ENCODE measurements at regions of chr15 and their contacts with region 1.

Region 1: GRCh38 chr15:98647774-98648653 is at the start of gene IGF1R:
- DNase-seq: peak; percentile 83 to 87 (median 85)
- H3K4me3 ChIP-seq: peak within 1 kb of the TSS; percentile 87 to 92 (median 88)
- H3K4me3 Mint-ChIP-seq: peak within 1 kb of the TSS; percentile 94 to 99
- H3K27ac ChIP-seq: peak within 1 kb of the TSS in 1 of 2 donors; percentile 75
- H3K27ac Mint-ChIP-seq: peak within 1 kb of the TSS in 6 of 7 donors; percentile 73 to 91 (median 85)
- H3K4me1 ChIP-seq: peaks cover 24 to 35% of the 10 kb centered on the region in 2 donors
- H3K4me1 Mint-ChIP-seq: peaks cover 32% of the 10 kb centered on the region
- H3K27me3 ChIP-seq: peaks cover 36 to 65% of the 10 kb centered on the region in 2 donors
- H3K27me3 Mint-ChIP-seq: peaks cover 49 to 64% (median 52%) of the 10 kb centered on the region in 3 donors
- CTCF ChIP-seq: peak; percentile 68
- polyA plus RNA-seq, gene IGF1R: 0.35 to 4.9 (median 0.67) TPM

Region 2: GRCh38 chr15:98518823-98519561 is 129.0 kb before region 1 on chr15:
- intact Hi-C with region 1: loop called in 1 of 2 experiments (anchors 5 kb)
- DNase-seq: peak; percentile 66 to 72 (median 68)
- H3K4me3 ChIP-seq: no peak overlapping the region
- H3K4me3 Mint-ChIP-seq: peak overlapping the region in 1 of 2 donors; percentile 56
- H3K27ac ChIP-seq: no peak overlapping the region
- H3K27ac Mint-ChIP-seq: no peak overlapping the region
- H3K4me1 ChIP-seq: peaks cover 5 to 7% of the 10 kb centered on the region in 2 donors
- H3K4me1 Mint-ChIP-seq: peaks cover 5% of the 10 kb centered on the region
- H3K27me3 ChIP-seq: no peaks in the 10 kb centered on the region
- H3K27me3 Mint-ChIP-seq: peaks cover 0 to 6% (median 0%) of the 10 kb centered on the region in 3 donors
- CTCF ChIP-seq: peak; percentile 87

Region 3: GRCh38 chr15:98548154-98548971 is 99.7 kb before region 1 on chr15:
- intact Hi-C with region 1: loop called in 1 of 2 experiments (anchors 10 kb)
- DNase-seq: peak; percentile 75 to 95 (median 87)
- H3K4me3 ChIP-seq: peak overlapping the region; percentile 38 to 68 (median 52)
- H3K4me3 Mint-ChIP-seq: peak overlapping the region; percentile 78 to 96
- H3K27ac ChIP-seq: peak overlapping the region in 1 of 2 donors; percentile 99
- H3K27ac Mint-ChIP-seq: peak overlapping the region; percentile 80 to 99 (median 88)
- H3K4me1 ChIP-seq: peaks cover 20 to 36% of the 10 kb centered on the region in 2 donors
- H3K4me1 Mint-ChIP-seq: peaks cover 23% of the 10 kb centered on the region
- H3K27me3 ChIP-seq: peaks cover 0 to 33% of the 10 kb centered on the region in 2 donors
- H3K27me3 Mint-ChIP-seq: peaks cover 30 to 48% (median 32%) of the 10 kb centered on the region in 3 donors
- CTCF ChIP-seq: no peak

Region 4: DNA sequence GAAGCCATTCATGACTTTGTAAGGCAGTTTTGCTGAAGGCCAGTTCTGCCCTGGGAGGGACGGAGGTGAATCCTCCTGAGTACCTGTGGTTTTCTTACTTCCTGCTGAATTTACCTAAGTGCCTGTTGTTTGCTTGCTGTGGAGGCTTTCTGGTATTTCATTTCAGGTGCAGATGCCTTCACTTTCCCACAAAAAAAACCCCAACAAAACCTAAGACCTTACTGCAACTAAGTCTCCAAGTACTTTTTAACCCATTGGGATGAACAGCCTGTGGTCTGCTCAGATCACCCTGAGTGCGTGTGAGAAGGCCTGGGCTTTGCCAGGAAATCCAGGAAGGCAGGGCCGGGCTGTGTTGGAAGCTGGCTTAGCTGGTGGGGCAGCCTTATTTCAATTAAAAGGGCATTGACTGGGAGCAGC is 65.6 kb after region 1 on chr15:
- intact Hi-C with region 1: no loop called
- DNase-seq: no peak
- H3K4me3 ChIP-seq: no peak overlapping the region
- H3K4me3 Mint-ChIP-seq: no peak overlapping the region
- H3K27ac ChIP-seq: no peak overlapping the region
- H3K27ac Mint-ChIP-seq: peak overlapping the region in 1 of 7 donors; percentile 31
- H3K4me1 ChIP-seq: peaks cover 6 to 15% of the 10 kb centered on the region in 2 donors
- H3K4me1 Mint-ChIP-seq: peaks cover 30% of the 10 kb centered on the region
- H3K27me3 ChIP-seq: no peaks in the 10 kb centered on the region
- H3K27me3 Mint-ChIP-seq: peaks cover 0 to 1% (median 0%) of the 10 kb centered on the region in 3 donors
- CTCF ChIP-seq: no peak

Region 5: DNA sequence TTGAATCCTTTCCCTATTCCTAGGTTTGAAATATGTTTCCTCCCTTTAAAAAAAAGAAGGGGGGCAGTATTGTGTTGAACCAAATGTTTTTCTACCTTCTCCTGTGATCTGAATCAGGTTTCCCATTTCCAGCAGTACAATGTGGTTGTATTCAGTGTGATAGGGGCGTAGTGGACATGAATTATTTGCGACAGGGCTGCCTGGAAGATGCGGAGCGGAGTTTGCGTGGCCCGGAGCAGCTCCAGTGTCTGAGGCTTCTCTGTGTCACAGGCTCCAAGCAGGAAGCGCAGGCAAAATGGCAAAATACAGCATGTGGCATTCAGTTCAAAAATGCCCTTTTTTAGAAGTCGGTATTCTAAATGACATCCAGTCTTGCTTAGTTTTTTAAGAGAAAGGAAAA is 205.1 kb after region 1 on chr15:
- intact Hi-C with region 1: loop called (anchors 1 kb)
- DNase-seq: peak; percentile 81 to 83 (median 82)
- H3K4me3 ChIP-seq: peak overlapping the region; percentile 57 to 86 (median 60)
- H3K4me3 Mint-ChIP-seq: peak overlapping the region; percentile 96 to 99
- H3K27ac ChIP-seq: peak overlapping the region in 1 of 2 donors; percentile 78
- H3K27ac Mint-ChIP-seq: peak overlapping the region; percentile 17 to 91 (median 86)
- H3K4me1 ChIP-seq: peaks cover 28 to 43% of the 10 kb centered on the region in 2 donors
- H3K4me1 Mint-ChIP-seq: peaks cover 42% of the 10 kb centered on the region
- H3K27me3 ChIP-seq: no peaks in the 10 kb centered on the region
- H3K27me3 Mint-ChIP-seq: no peaks in the 10 kb centered on the region
- CTCF ChIP-seq: no peak

Measured in CD14-positive monocyte (primary cell).